Ovary (tissue), 10 donors: ENCODE measurements at regions of chr13 and their contacts with region 1.

Region 1: DNA sequence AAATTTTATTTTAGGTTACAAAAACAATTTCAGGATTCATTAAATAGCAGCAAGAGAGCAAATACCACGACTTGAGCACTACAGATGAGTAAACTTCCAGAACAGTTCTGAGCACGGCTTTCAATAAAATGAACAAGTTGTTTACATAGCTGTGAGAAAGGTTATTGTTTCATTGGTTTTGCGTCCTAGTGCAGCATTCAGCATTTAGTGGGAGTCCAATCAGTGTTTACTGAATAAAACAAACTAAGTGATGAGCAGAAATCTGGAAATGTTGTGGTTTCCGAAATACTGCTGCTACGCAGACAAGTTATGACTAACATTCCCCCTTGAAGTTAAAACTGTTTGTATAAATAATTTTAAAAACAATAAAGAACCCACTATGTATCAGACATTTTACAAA is 251.5 kb upstream of the STARD13 start:
- DNase-seq: no peak
- H3K4me3 ChIP-seq: no peak overlapping the region
- H3K27ac ChIP-seq: peak overlapping the region in 1 of 2 donors; percentile 61
- H3K4me1 ChIP-seq: peaks cover 3% of the 10 kb centered on the region
- H3K27me3 ChIP-seq: no peaks in the 10 kb centered on the region
- CTCF ChIP-seq: no peak
- EP300 ChIP-seq: no peak
- POLR2A ChIP-seq: no peak

Region 2: GRCh38 chr13:33125821-33126570 is 411.0 kb before region 1 on chr13:
- intact Hi-C with region 1: loop called in 1 of 4 experiments (anchors 10 kb)
- DNase-seq: peak; percentile 59 to 77 (median 73)
- H3K4me3 ChIP-seq: no peak overlapping the region
- H3K27ac ChIP-seq: peak overlapping the region in 1 of 2 donors; percentile 55
- H3K4me1 ChIP-seq: peaks cover 13% of the 10 kb centered on the region
- H3K27me3 ChIP-seq: no peaks in the 10 kb centered on the region
- CTCF ChIP-seq: no peak
- EP300 ChIP-seq: no peak
- POLR2A ChIP-seq: no peak

Region 3: GRCh38 chr13:33285420-33286124 is 251.5 kb before region 1 on chr13 and contains the start of gene STARD13:
- intact Hi-C with region 1: loop called in 2 of 4 experiments (anchors 10 kb)
- DNase-seq: peak; percentile 92 to 96 (median 93)
- H3K4me3 ChIP-seq: peak within 1 kb of the TSS; percentile 64
- H3K27ac ChIP-seq: peak within 1 kb of the TSS; percentile 73 to 89
- H3K4me1 ChIP-seq: no peaks in the 10 kb centered on the region
- H3K27me3 ChIP-seq: no peaks in the 10 kb centered on the region
- CTCF ChIP-seq: peak; percentile 12 to 70 (median 63)
- EP300 ChIP-seq: peak; percentile 15
- POLR2A ChIP-seq: peak; percentile 77
- total RNA-seq, gene STARD13: 8.1 to 31.5 (median 14.0) TPM